ENCODE measurements at regions of chr11 and their contacts with region 1.

Region 1: GRCh38 chr11:2208691-2209369 is 37.2 kb upstream of the TH start:
- DNase-seq: peak; percentile 12
- ATAC-seq: no peak
- H3K4me3 ChIP-seq: no peak overlapping the region
- H3K27ac ChIP-seq: peak overlapping the region; percentile 99
- H3K4me1 ChIP-seq: peaks cover 91% of the 10 kb centered on the region
- H3K27me3 ChIP-seq: no peaks in the 10 kb centered on the region; a peak in 1 of 5 replicates
- CTCF ChIP-seq: peak; percentile 22; the same call in 1 of the 2 replicates
- EP300 ChIP-seq: no peak
- POLR2A ChIP-seq: no peak
- RAD21 ChIP-seq: peak; percentile 72

Region 2: GRCh38 chr11:2269601-2270321 is 60.9 kb after region 1 on chr11:
- CTCF ChIA-PET with region 1: no interaction called
- POLR2A ChIA-PET with region 1: interaction called, 6 read pairs
- in situ Hi-C with region 1: no loop called
- intact Hi-C with region 1: loop called (anchors 10 kb)
- DNase-seq: no peak
- ATAC-seq: no peak
- H3K4me3 ChIP-seq: peak overlapping the region in 2 of 3 experiments; percentile 61 to 73; a peak in 3 of 6 replicates
- H3K27ac ChIP-seq: no peak overlapping the region
- H3K4me1 ChIP-seq: peaks cover 10% of the 10 kb centered on the region; the same call in 1 of the 2 replicates
- H3K27me3 ChIP-seq: peaks cover 4 to 20% of the 10 kb centered on the region in 2 experiments; a peak in 4 of 5 replicates
- CTCF ChIP-seq: no peak
- EP300 ChIP-seq: no peak
- POLR2A ChIP-seq: no peak
- RAD21 ChIP-seq: no peak

Region 3: GRCh38 chr11:2400069-2400760 is 191.4 kb after region 1 on chr11 and contains the start of gene TSSC4:
- CTCF ChIA-PET with region 1: no interaction called
- POLR2A ChIA-PET with region 1: interaction called, 10 read pairs
- in situ Hi-C with region 1: no loop called
- intact Hi-C with region 1: loop called (anchors 5 kb)
- DNase-seq: peak; percentile 99
- ATAC-seq: peak; percentile 91
- H3K4me3 ChIP-seq: peak within 1 kb of the TSS; percentile 80 to 99 (median 96)
- H3K27ac ChIP-seq: peak within 1 kb of the TSS; percentile 78
- H3K4me1 ChIP-seq: peaks cover 24% of the 10 kb centered on the region
- H3K27me3 ChIP-seq: peaks cover 0 to 3% of the 10 kb centered on the region in 2 experiments; a peak in 2 of 5 replicates
- CTCF ChIP-seq: peak; percentile 100
- EP300 ChIP-seq: peak in 1 of 2 experiments; percentile 34; a peak in 2 of 4 replicates
- POLR2A ChIP-seq: peak in 1 of 2 experiments; percentile 75; a peak in 1 of 4 replicates
- RAD21 ChIP-seq: peak; percentile 97
- total RNA-seq, gene TSSC4: 51.5 and 58.6 TPM in 2 replicates

Region 4: DNA sequence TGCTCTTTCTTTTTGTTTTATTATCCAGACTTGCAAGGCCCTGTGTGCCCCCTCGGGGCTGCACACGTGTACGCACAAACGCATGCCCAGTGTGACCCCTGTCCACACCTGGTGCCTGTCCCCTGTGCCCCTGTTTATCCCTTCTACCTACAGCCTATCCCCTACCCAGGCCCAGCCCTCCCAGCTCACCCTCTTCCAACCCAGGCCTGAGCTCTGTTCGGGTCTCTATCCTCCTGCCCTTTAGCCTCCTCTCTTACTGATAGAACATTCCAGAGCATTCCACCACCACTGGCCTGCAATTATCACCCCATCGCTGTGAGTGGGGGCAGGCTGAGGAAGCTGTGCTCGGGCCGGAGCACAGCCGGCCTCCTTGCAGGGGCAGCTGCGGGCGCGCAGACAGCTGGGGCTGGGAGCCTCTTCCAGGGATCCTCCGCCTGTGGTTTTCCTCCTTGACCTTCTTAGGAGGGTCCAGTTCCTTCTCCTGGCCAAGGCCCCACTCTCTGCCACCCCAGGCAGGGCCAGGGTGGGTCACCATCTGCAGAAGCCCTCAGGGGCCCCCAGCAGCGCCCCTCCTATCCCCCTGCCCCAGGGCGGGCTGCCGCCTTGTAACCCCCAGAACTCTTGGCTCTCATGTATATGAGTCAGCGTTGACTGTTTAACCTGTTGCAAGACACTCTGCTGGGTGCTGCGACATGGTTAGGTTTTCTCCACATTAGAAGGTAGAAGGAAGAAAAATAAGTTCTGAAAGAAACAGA is 532.7 kb after region 1 on chr11:
- CTCF ChIA-PET with region 1: no interaction called
- POLR2A ChIA-PET with region 1: no interaction called
- in situ Hi-C with region 1: loop called (anchors 25 kb)
- intact Hi-C with region 1: no loop called
- DNase-seq: no peak
- ATAC-seq: peak; percentile 61
- H3K4me3 ChIP-seq: peak overlapping the region; percentile 16 to 40 (median 24); a peak in 3 of 6 replicates
- H3K27ac ChIP-seq: no peak overlapping the region
- H3K4me1 ChIP-seq: peaks cover 60% of the 10 kb centered on the region
- H3K27me3 ChIP-seq: peaks cover 10 to 43% of the 10 kb centered on the region in 2 experiments; a peak in 4 of 5 replicates
- CTCF ChIP-seq: 0 out of 2 replicates have a peak, but pooled peaks have one; percentile 6
- EP300 ChIP-seq: no peak
- POLR2A ChIP-seq: no peak
- RAD21 ChIP-seq: no peak

Measured in HepG2 (cell line).